Upper lobe of right lung (tissue), 1 donor: ENCODE measurements at regions of chr22 and their contacts with region 1.

Region 1: GRCh38 chr22:37431801-37432707 is 4.8 kb upstream of the ELFN2 start:
- DNase-seq: no peak
- ATAC-seq: no peak
- H3K4me3 ChIP-seq: no peak overlapping the region
- H3K27ac ChIP-seq: no peak overlapping the region
- H3K4me1 ChIP-seq: no peaks in the 10 kb centered on the region
- H3K27me3 ChIP-seq: peaks cover 36% of the 10 kb centered on the region
- CTCF ChIP-seq: no peak

Region 2: DNA sequence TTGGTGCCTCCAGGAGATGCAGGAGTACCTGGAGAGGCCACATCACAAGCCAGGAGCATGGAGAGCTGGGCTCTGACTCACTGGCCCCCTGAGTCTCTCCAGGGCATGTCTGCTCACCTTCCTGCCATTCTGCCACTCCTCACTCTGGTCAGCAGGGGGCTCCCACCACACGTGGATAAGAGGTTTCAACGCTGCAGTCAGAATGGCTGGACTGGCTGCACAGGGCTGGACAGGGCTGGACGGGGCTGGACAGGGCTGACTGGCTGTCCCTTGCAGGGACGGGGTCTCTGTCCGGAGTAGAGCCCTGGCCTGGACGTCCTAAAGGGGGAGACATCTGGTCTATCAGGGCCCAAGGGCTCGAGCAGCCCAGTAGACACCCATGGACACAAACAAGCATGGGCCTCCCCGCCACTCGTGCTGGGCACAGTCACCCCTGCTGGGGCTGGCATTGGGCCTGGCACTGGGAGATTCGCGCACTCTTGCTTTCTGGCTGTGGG is 115.1 kb before region 1 on chr22:
- intact Hi-C with region 1: loop called (anchors 10 kb)
- DNase-seq: peak; percentile 84
- ATAC-seq: peak; percentile 91
- H3K4me3 ChIP-seq: no peak overlapping the region
- H3K27ac ChIP-seq: no peak overlapping the region
- H3K4me1 ChIP-seq: peaks cover 10% of the 10 kb centered on the region
- H3K27me3 ChIP-seq: no peaks in the 10 kb centered on the region
- CTCF ChIP-seq: peak; percentile 85

Region 3: GRCh38 chr22:37501610-37502341 is 69.7 kb after region 1 on chr22:
- intact Hi-C with region 1: no loop called
- DNase-seq: peak; percentile 82
- ATAC-seq: peak; percentile 76
- H3K4me3 ChIP-seq: no peak overlapping the region
- H3K27ac ChIP-seq: peak overlapping the region; percentile 71
- H3K4me1 ChIP-seq: peaks cover 43% of the 10 kb centered on the region
- H3K27me3 ChIP-seq: no peaks in the 10 kb centered on the region
- CTCF ChIP-seq: no peak